ENCODE measurements at regions of chr1 and their contacts with region 1.

Region 1: DNA sequence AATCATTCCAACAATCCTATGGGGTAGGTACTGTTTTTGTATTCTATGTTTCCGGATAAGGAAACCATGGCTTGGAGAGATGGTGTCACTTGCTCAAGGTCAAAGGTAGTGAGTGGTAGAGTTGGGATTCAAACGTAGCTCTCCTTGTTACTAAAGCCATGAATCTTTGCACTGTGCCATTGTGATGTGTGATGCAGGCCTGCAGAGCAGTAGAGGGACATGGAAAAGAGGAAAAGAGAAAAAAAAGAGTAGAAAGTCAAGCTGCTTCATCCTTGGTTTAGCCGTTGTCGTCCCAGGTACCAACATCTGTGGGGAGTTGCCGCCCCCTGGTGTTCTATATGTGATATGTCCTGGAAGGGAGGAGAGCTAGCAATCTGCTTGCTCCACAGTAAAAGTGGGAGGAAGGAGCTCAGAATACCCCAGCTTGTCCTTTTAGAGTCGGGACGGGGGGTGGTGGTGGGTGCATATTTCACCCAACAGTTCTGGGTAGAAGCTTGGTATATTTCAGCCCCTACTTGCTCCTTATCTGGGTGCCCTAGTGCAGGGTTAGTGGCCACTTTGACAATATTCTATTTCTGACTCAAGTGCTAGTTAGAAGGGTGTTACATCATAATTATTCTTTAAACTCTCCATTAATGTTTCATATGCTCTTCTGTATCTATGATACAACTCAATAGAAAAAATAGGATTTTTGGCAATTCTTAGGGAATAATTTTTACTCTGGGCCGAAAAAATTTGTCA is 98.4 kb downstream of the EBNA1BP2 start:
- DNase-seq: peak; percentile 56
- ATAC-seq: peak; percentile 87
- H3K4me3 Mint-ChIP-seq: peak overlapping the region; percentile 11
- H3K27ac Mint-ChIP-seq: peak overlapping the region; percentile 6
- H3K4me1 Mint-ChIP-seq: peaks cover 29% of the 10 kb centered on the region
- H3K27me3 Mint-ChIP-seq: no peaks in the 10 kb centered on the region
- CTCF ChIP-seq: peak; percentile 30

Region 2: GRCh38 chr1:42128964-42129363 is 944.7 kb before region 1 on chr1:
- CTCF ChIA-PET with region 1: no interaction called
- POLR2A ChIA-PET with region 1: no interaction called
- intact Hi-C with region 1: no loop called
- DNase-seq: no peak
- ATAC-seq: no peak
- H3K4me3 Mint-ChIP-seq: no peak overlapping the region
- H3K27ac Mint-ChIP-seq: no peak overlapping the region
- H3K4me1 Mint-ChIP-seq: no peaks in the 10 kb centered on the region
- H3K27me3 Mint-ChIP-seq: peaks cover 8% of the 10 kb centered on the region
- CTCF ChIP-seq: no peak

Region 3: DNA sequence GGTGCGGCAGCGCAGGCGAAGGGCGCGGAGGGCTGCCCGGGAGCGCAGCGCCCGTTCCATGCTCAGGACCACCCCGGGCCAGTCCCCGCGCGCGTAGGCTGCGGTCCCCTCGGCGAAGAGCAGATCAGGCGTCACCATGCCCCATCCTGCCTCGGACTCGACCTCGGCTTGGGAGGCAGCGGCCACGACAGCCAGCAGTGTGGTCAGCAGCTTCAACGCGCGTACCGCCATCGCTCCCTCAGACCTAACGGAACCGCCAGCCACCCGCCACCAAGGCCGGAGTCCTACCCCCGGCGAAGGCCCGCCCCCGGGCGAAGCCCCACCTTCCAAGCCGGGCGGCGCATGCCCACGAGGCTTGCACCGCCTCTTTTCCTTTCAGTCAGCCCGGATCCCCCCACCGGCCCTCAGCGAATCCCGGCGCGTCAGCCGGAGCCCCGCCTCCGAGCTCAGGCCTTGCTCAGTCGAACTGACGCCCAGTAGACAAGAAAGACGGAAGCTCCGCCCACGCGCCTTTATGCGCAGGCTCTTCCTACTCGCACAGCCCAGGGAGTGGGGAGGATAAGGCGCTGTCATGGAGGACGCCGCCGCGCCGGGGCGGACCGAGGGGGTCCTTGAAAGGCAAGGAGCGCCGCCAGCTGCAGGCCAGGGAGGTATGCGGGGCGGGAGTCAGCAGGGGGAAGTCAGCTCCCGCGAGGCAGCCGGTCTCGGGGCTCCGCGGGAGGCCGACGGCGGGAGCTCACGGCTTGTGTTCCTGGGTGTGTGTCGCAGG is 306.7 kb before region 1 on chr1 and contains the starts of genes C1orf50 and P3H1:
- CTCF ChIA-PET with region 1: interaction called, 8 read pairs
- POLR2A ChIA-PET with region 1: interaction called, 10 read pairs
- intact Hi-C with region 1: no loop called
- DNase-seq: peak; percentile 99
- ATAC-seq: peak; percentile 91
- H3K4me3 Mint-ChIP-seq: no peak within 1 kb of the TSS
- H3K27ac Mint-ChIP-seq: peak within 1 kb of the TSS; percentile 93
- H3K4me1 Mint-ChIP-seq: peaks cover 33% of the 10 kb centered on the region
- H3K27me3 Mint-ChIP-seq: no peaks in the 10 kb centered on the region
- CTCF ChIP-seq: no peak
- total RNA-seq, gene C1orf50: 10.6 and 13.1 TPM in 2 replicates
- total RNA-seq, gene P3H1: 27.1 and 30.4 TPM in 2 replicates

Region 4: DNA sequence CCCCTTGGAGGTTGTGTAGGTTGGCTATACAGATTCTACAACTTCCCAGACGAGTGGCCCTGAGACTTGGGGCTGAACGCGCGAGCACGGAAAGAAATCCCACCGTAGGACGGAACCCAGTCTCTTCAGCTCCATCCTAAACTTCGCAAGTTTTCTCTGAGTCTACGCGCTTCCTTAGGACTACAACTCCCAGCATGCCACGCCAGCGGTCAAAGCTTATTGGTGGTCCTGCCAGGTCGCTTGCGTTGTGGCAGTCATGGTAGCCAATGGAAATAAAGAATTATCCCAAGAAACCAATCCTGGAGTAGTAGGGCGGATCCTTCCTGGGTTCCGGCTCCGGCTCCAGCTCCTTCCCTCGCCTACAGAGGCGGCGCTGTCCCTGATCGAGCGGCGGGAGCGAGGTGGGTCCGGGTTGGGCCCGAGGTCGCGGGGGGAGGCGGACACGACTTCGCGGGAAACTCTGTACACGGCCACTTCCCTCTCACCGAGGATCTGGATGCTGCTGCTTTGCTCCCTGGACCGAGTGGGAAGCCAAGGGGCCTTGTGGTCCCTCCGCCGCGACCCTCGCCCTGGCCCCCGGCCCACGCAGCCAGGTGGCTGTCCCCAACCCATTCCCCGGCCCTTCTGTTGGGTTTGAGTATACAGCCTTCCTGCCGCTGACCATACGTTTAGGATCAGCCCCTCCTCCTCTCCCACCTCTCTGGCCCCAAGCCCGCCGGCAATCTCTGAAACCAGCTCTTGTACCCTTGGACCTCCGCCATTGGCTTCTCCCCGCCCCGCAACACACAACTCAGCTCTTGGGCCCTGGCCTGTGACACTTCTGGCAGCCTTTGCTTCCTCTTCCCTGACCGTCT is 227.2 kb before region 1 on chr1 and contains the start of gene ZNF691:
- CTCF ChIA-PET with region 1: interaction called, 17 read pairs
- POLR2A ChIA-PET with region 1: interaction called, 4 read pairs
- intact Hi-C with region 1: no loop called
- DNase-seq: peak; percentile 63
- ATAC-seq: peak; percentile 97
- H3K4me3 Mint-ChIP-seq: peak within 1 kb of the TSS; percentile 94
- H3K27ac Mint-ChIP-seq: peak within 1 kb of the TSS; percentile 83
- H3K4me1 Mint-ChIP-seq: peaks cover 43% of the 10 kb centered on the region
- H3K27me3 Mint-ChIP-seq: no peaks in the 10 kb centered on the region
- CTCF ChIP-seq: no peak
- total RNA-seq, gene ZNF691: 13.1 and 16.1 TPM in 2 replicates

Region 5: DNA sequence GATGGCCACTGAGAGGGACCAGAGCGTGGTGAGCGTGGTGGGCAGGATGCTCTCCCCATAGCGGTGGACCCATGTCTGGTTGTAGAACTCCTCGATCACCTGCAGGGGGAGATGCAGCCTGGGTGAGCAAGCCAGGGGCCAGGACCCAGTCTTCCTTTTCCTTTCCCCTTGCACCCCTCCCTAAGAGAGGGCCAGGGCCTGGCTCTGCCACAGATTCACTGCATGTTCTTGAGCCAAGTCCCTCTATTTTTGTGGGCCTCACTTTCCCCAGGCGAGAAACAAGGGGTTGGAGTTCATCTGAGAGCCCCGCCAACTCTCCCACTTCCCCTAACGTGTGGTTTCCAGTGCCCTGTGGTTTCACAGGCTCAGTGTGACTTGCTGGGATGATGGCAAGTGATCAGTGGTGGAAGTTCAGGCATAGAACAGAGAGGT is 142.5 kb before region 1 on chr1:
- CTCF ChIA-PET with region 1: interaction called, 17 read pairs
- POLR2A ChIA-PET with region 1: interaction called, 22 read pairs
- intact Hi-C with region 1: loop called (anchors 1 kb)
- DNase-seq: peak; percentile 47
- ATAC-seq: peak; percentile 16
- H3K4me3 Mint-ChIP-seq: peak overlapping the region; percentile 69
- H3K27ac Mint-ChIP-seq: peak overlapping the region; percentile 91
- H3K4me1 Mint-ChIP-seq: peaks cover 75% of the 10 kb centered on the region
- H3K27me3 Mint-ChIP-seq: no peaks in the 10 kb centered on the region
- CTCF ChIP-seq: no peak

Region 6: GRCh38 chr1:42958488-42959319 is 115.0 kb before region 1 on chr1 and contains the start of gene SLC2A1:
- CTCF ChIA-PET with region 1: interaction called, 34 read pairs
- POLR2A ChIA-PET with region 1: interaction called, 20 read pairs
- intact Hi-C with region 1: no loop called
- DNase-seq: peak; percentile 90
- ATAC-seq: peak; percentile 89
- H3K4me3 Mint-ChIP-seq: peak within 1 kb of the TSS; percentile 99
- H3K27ac Mint-ChIP-seq: peak within 1 kb of the TSS; percentile 99
- H3K4me1 Mint-ChIP-seq: peaks cover 77% of the 10 kb centered on the region
- H3K27me3 Mint-ChIP-seq: peaks cover 1% of the 10 kb centered on the region
- CTCF ChIP-seq: no peak
- total RNA-seq, gene SLC2A1: 105 and 117 TPM in 2 replicates